Activated CD8-positive, alpha-beta T cell treated with anti-CD3 and anti-CD28 coated beads, Interleukin-2, amount 10 ng/mL, durations not matched to agents 7 days and 5 days (primary cell): ENCODE measurements at regions of chr17 and their contacts with region 1.

Region 1: GRCh38 chr17:7336240-7337175 is at the start of gene ACAP1:
- DNase-seq: peak; percentile 95
- ATAC-seq: peak; percentile 95
- H3K4me3 Mint-ChIP-seq: peak within 1 kb of the TSS; percentile 85
- H3K27ac Mint-ChIP-seq: peak within 1 kb of the TSS; percentile 98
- H3K4me1 Mint-ChIP-seq: peaks cover 59% of the 10 kb centered on the region
- H3K27me3 Mint-ChIP-seq: no peaks in the 10 kb centered on the region
- total RNA-seq, gene ACAP1: 573 to 605 TPM

Region 2: DNA sequence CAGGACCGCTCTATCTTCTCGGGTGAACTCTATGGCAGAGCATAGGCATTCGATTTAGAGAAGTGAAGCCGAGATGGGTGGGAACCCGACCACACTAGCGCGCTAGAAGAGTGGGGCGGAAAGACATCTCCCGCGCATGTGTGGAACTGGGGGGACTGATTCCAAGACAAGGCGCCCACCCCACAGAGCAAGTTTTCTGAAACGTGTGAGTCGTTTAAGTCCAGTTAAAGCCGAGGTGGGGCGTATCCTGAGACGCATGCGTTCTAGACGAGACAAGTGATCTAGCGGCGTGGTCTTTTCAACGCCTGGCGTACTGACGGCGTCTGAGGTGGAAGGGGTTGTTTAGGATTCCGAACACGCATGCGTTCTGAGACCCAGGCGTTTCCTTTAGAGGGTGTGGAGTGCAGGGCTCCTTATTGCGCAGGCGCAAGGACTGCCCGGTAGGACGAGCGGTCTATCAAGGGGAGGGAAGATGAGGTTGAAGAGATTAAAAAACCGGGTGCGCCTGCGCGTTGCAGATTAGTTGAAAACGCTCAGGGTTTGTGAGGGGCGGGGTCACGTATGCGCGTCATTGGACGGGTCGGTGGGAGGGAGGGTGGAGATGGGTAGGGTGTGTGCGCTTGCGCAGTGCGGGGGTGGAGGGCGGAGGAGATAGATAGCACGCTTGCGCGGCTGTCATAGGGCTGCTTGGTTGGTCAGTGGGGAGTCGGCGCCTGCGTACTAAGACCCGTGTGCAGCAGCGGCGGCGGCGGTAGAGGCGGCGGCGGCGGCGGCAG is 29.4 kb before region 1 on chr17 and contains the start of gene EIF5A:
- CTCF ChIA-PET with region 1: interaction called, 4 read pairs
- POLR2A ChIA-PET with region 1: interaction called, 29 read pairs
- DNase-seq: peak; percentile 100
- ATAC-seq: peak; percentile 86
- H3K4me3 Mint-ChIP-seq: peak within 1 kb of the TSS; percentile 93
- H3K27ac Mint-ChIP-seq: peak within 1 kb of the TSS; percentile 99
- H3K4me1 Mint-ChIP-seq: peaks cover 38% of the 10 kb centered on the region
- H3K27me3 Mint-ChIP-seq: peaks cover under 1% of the 10 kb centered on the region
- total RNA-seq, gene EIF5A: 685 to 690 TPM

Region 3: DNA sequence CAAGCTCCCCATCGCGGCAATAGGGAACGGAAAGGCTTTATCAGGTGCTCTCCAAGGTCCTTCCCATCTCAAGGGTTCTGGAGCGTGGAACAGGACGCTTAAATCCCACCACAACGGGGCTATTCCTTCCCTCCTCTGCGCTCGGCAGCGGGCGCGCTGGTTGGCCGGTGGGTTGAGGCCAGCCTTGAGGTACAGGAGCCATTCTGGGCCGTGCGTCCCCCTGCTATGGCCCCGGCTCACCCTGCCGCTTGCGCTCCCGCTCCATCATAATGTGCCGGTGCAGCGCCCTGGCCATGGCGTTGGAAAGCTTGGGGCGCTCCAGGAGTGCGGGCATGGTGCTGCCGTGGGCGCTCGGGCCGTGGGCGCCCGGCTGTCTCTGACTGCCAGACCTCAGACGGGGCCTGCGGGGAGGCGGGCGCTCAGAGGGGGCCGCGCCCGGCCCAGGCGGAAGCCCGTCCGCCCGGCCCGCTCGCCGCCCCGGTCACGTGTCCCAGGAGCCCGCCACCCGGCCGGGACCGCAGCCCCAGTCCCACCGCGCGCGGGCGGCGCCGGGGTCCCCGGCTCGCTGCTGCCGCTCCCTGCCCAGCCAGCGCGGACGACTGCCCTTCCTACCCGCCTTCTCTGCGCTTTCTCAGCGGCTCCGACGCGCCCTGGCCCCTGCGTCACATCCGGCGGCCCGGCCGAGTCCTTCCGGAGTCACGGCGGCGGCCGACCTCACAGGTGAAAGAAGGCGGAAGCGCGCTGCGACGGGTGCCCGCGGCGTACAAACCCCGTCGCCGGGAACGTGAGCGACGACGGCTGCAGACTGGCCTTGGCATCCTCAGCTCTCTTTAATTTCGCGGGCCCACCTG is 21.6 kb before region 1 on chr17 and contains the start of gene GPS2:
- CTCF ChIA-PET with region 1: interaction called, 6 read pairs
- POLR2A ChIA-PET with region 1: interaction called, 29 read pairs
- DNase-seq: peak; percentile 96
- ATAC-seq: peak; percentile 86
- H3K4me3 Mint-ChIP-seq: peak within 1 kb of the TSS; percentile 91
- H3K27ac Mint-ChIP-seq: peak within 1 kb of the TSS; percentile 97
- H3K4me1 Mint-ChIP-seq: peaks cover 61% of the 10 kb centered on the region
- H3K27me3 Mint-ChIP-seq: no peaks in the 10 kb centered on the region
- total RNA-seq, gene GPS2: 86.3 to 88.0 TPM

Region 4: DNA sequence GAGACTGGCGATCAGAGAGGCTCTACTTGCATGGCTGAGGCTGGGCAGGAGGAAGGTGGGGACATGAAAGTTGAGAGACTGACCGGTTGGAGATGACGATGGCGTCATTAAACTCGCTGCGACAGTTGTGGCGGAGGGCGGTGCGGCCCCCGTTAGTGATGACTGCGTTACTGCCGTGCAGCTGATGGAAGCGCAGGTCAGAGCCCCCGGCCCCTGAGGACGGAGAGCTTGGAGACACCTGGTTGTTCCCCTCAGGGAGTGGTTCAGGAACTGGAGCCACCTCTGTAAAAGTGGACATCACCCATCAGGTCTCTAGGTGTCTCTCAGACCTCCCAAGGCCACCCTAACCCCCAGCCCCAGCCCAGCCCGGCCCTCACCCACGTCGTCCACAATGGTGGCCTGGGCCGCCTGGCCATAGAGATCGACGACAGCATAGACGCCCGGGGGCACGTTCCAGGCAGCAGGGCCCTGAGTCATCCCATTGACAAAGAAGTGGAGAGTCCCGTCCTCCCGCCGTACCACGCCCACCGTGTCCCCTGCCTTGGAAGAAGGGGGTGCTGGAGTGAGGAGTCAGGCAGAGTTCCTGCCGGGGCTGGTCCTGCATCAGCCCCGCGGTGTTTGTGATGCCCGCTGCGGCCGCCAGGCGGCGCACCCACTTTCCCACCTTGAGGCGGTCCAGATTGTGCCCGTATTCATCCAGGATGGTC is 12.6 kb before region 1 on chr17:
- CTCF ChIA-PET with region 1: interaction called, 41 read pairs
- POLR2A ChIA-PET with region 1: interaction called, 12 read pairs
- DNase-seq: peak; percentile 71
- ATAC-seq: peak; percentile 48
- H3K4me3 Mint-ChIP-seq: no peak overlapping the region
- H3K27ac Mint-ChIP-seq: peak overlapping the region; percentile 49
- H3K4me1 Mint-ChIP-seq: peaks cover 29% of the 10 kb centered on the region
- H3K27me3 Mint-ChIP-seq: no peaks in the 10 kb centered on the region